Heart left ventricle (tissue), 16 donors: ENCODE measurements at regions of chr6 and their contacts with region 1.

Region 1: DNA sequence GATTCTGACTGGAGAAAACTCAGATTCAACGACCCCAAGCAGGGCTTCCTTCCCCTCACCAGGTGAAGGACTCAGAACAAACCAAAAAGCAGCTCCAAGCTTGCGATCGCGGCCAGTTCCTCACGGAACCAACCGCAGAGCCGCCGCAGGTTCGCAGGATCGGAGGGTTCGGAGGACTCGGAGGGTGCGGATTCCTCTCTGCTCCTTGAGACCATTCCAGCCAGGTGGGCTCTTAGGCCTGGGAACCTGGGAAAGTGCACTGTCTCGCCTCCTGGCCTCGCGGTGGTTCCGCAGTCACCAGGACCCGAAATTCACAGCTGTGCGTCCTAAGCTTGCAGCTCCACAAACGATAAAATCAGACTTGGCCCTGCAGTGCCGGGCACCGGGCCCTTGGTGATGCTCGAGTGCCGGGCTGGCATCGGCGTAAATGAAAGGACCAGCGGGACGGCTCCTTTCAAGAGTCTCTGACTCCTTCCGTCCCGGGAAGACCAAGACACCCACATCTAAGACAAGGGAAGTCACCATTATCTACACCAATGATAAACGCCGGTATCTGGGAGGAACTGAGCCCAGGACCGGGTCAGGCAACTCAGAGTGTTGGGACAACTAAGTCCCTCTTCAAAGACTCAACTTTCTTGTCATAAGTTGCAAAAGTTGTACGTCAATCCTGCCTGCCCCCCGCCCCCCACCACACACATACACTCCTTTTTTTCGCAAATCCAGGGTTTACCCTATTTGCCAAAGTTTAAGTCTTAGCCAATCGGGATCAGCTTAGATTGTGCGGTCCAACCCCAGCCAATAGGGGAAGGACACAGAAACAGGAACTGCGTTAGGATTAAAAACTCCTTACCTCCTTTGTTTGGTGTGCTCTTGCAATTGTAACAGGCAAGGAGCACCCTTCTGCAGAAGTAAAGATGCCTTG is 69.8 kb upstream of the PRSS16 start:
- DNase-seq: peak; percentile 61 to 83 (median 74)
- ATAC-seq: peak; percentile 77 to 91 (median 90)
- H3K4me3 ChIP-seq: peak overlapping the region; percentile 62 to 96 (median 76)
- H3K27ac ChIP-seq: peak overlapping the region in 11 of 12 donors; percentile 14 to 83 (median 67)
- H3K4me1 ChIP-seq: peaks cover 0 to 17% (median 5%) of the 10 kb centered on the region in 12 donors
- H3K27me3 ChIP-seq: no peaks in the 10 kb centered on the region
- CTCF ChIP-seq: peak in 9 of 12 donors; percentile 19 to 51 (median 35)
- POLR2A ChIP-seq: peak in 1 of 2 donors; percentile 39

Region 2: DNA sequence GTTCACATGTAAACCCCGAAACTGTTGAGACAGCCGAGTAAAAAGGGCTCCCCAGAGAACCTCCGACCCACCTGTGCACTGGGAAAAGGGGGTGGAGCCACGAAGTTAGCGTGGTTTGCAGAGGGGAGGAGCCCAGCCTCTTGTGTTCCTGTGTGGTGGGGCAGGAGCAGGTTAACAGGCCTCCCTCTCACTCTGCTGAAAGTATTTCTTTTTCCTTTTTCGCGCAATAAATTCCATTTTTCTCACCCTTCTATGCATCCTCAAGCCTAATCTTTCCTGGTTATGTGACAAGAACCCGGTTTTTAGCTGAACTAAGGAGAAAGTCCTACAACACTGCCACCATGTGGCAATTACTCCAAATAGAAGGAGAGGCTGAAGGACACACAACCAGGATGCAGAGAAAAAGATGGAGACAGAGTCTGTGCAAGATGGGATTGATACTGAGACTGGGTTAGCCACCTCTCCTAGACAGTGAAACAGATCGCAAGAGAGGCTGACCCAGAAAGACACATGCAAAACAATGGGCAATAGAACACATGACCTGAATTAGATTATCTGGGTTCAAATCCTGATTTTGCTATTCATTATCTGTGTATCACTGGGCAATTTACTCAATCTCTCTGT is 98.9 kb before region 1 on chr6:
- intact Hi-C with region 1: no loop called
- DNase-seq: peak in 1 of 5 donors; percentile 18
- ATAC-seq: peak in 2 of 4 donors; percentile 66 to 68
- H3K4me3 ChIP-seq: peak overlapping the region in 1 of 12 donors; percentile 8
- H3K27ac ChIP-seq: no peak overlapping the region
- H3K4me1 ChIP-seq: peaks cover 0 to 4% (median 0%) of the 10 kb centered on the region in 12 donors
- H3K27me3 ChIP-seq: peaks cover 0 to 69% (median 17%) of the 10 kb centered on the region in 9 donors
- CTCF ChIP-seq: peak; percentile 42 to 71 (median 58)
- POLR2A ChIP-seq: no peak

Region 3: GRCh38 chr6:27230758-27231111 is 53.0 kb after region 1 on chr6:
- intact Hi-C with region 1: no loop called
- DNase-seq: no peak
- ATAC-seq: no peak
- H3K4me3 ChIP-seq: no peak overlapping the region
- H3K27ac ChIP-seq: no peak overlapping the region
- H3K4me1 ChIP-seq: no peaks in the 10 kb centered on the region
- H3K27me3 ChIP-seq: peaks cover 0 to 91% (median 38%) of the 10 kb centered on the region in 9 donors
- CTCF ChIP-seq: no peak
- POLR2A ChIP-seq: no peak

Region 4: DNA sequence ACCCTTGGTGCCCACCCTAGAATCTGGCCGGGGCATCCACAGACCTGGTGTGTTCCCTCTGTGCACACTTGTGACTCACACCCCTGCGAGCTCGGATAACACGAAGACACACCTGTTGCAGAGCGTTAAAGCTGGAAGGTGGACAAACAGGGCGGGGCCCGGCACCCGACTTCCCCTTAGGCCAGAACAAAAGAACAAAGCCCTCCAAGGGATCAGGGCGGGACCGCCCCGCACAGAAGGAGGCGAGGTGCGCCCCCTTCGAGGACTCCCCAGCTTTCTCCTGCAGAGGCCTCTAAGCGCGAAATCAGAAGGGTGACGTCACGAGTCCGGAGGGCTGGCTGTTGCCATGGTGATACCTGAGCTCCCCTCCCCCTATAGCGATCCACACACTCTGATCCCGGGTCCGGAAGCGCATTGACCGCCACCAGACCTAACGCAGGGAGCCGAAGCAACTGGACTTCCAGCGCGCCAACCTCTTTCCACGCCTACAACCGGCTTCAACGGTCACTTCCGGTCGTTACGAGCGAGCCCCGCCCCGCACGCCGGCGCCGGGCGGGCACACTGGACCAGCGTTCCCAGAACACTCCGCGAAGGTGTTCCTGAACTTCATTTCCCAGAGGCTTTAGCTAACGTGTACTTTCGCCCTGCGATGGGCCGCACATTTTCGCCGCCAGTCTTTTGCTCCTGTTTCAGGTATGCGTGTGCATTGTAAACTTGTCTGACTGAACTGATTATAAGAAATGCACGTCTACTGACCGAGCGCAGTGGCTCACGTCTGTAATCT is 295.1 kb after region 1 on chr6 and contains the start of gene ZNF184:
- intact Hi-C with region 1: loop called in 9 of 10 experiments (anchors 5 to 10 kb)
- DNase-seq: peak; percentile 95 to 96 (median 96)
- ATAC-seq: peak; percentile 99 to 100 (median 100)
- H3K4me3 ChIP-seq: peak within 1 kb of the TSS; percentile 52 to 99 (median 86)
- H3K27ac ChIP-seq: peak within 1 kb of the TSS; percentile 34 to 92 (median 86)
- H3K4me1 ChIP-seq: peaks cover 0 to 37% (median 19%) of the 10 kb centered on the region in 12 donors
- H3K27me3 ChIP-seq: no peaks in the 10 kb centered on the region
- CTCF ChIP-seq: peak in 3 of 12 donors; percentile 2 to 29 (median 24)
- POLR2A ChIP-seq: peak in 1 of 2 donors; percentile 78
- total RNA-seq, gene ZNF184: 3.2 to 6.5 (median 4.0) TPM

Region 5: GRCh38 chr6:27479319-27480182 is 301.8 kb after region 1 on chr6:
- intact Hi-C with region 1: loop called in 9 of 10 experiments (anchors 5 to 10 kb)
- DNase-seq: peak; percentile 51 to 89 (median 76)
- ATAC-seq: peak; percentile 89 to 95 (median 94)
- H3K4me3 ChIP-seq: peak overlapping the region; percentile 70 to 96 (median 76)
- H3K27ac ChIP-seq: peak overlapping the region; percentile 92 to 100 (median 96)
- H3K4me1 ChIP-seq: peaks cover 0 to 15% (median 10%) of the 10 kb centered on the region in 12 donors
- H3K27me3 ChIP-seq: no peaks in the 10 kb centered on the region
- CTCF ChIP-seq: no peak
- POLR2A ChIP-seq: peak in 1 of 2 donors; percentile 24

Region 6: DNA sequence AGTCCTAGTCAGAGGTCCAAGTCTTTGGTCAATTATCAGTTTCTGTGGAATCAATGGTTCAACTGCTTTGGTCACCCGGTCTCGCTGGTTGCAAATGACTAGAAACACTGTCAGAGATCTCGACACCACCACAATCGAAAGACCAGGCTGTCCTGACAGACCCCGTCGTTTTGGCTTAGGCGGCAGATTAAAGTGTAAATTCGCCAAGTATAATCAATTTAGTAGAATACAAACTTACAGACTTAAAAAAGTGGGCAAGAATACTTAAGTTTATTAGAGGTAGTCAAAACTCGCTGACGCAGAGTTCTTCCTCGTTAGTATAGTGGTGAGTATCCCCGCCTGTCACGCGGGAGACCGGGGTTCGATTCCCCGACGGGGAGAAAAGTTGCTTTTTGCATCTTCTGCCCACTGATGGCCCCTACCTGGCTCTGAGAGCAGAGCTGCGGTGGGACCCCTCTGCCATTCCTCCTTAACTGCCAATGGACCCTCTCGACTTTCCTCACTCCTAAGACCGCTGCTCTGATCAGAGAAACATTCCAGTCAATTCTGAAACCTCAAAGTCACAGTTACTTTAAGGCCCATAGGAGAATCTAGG is 325.8 kb after region 1 on chr6:
- intact Hi-C with region 1: loop called in 2 of 10 experiments (anchors 5 to 10 kb)
- DNase-seq: peak; percentile 40 to 79 (median 44)
- ATAC-seq: peak; percentile 72 to 82 (median 79)
- H3K4me3 ChIP-seq: peak overlapping the region in 11 of 12 donors; percentile 29 to 63 (median 52)
- H3K27ac ChIP-seq: peak overlapping the region in 1 of 12 donors; percentile 2
- H3K4me1 ChIP-seq: peaks cover 0 to 13% (median 5%) of the 10 kb centered on the region in 12 donors
- H3K27me3 ChIP-seq: peaks cover 0 to 28% (median 2%) of the 10 kb centered on the region in 9 donors
- CTCF ChIP-seq: no peak
- POLR2A ChIP-seq: no peak

Region 7: DNA sequence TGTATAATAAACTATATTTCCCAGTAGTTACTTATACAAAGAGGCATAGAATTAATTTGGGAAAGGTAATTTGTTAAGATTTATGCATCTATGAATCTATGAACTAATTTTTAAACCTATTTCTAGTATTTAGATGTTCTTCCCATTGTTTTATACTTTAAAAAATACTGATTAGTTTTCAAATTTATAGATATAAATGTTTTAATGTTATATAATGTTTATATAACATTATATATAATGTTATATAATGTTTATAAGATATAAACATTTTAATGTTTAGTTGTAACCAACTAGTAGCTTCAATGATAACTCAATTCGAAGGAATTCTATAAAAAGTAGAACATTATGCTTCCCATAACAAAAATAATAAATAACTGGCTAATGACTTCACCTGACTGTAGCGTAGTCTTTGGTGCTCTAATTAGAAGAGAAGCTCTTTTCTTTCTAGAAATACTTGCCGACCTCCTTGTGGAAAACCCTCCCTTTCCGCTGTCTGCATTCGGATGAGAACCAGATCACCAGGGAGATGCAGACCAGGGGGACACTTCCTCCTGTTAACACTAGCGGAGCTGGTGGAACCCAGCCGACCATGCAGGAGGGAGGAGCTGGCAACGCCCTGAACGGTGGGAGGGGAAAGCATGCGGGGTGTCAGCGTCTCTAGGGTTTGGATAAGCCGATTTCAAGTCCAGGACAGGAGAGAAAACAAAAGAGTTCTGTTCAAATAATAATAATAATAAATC is 576.1 kb after region 1 on chr6:
- intact Hi-C with region 1: loop called in 2 of 10 experiments (anchors 5 to 10 kb)
- DNase-seq: peak; percentile 37 to 81 (median 56)
- ATAC-seq: peak in 2 of 4 donors; percentile 67 to 77
- H3K4me3 ChIP-seq: peak overlapping the region in 10 of 12 donors; percentile 61 to 88 (median 69)
- H3K27ac ChIP-seq: no peak overlapping the region
- H3K4me1 ChIP-seq: peaks cover 0 to 23% (median 7%) of the 10 kb centered on the region in 12 donors
- H3K27me3 ChIP-seq: peaks cover 5 to 30% (median 20%) of the 10 kb centered on the region in 9 donors
- CTCF ChIP-seq: peak in 1 of 12 donors; percentile 7
- POLR2A ChIP-seq: peak in 1 of 2 donors; percentile 7

Region 8: DNA sequence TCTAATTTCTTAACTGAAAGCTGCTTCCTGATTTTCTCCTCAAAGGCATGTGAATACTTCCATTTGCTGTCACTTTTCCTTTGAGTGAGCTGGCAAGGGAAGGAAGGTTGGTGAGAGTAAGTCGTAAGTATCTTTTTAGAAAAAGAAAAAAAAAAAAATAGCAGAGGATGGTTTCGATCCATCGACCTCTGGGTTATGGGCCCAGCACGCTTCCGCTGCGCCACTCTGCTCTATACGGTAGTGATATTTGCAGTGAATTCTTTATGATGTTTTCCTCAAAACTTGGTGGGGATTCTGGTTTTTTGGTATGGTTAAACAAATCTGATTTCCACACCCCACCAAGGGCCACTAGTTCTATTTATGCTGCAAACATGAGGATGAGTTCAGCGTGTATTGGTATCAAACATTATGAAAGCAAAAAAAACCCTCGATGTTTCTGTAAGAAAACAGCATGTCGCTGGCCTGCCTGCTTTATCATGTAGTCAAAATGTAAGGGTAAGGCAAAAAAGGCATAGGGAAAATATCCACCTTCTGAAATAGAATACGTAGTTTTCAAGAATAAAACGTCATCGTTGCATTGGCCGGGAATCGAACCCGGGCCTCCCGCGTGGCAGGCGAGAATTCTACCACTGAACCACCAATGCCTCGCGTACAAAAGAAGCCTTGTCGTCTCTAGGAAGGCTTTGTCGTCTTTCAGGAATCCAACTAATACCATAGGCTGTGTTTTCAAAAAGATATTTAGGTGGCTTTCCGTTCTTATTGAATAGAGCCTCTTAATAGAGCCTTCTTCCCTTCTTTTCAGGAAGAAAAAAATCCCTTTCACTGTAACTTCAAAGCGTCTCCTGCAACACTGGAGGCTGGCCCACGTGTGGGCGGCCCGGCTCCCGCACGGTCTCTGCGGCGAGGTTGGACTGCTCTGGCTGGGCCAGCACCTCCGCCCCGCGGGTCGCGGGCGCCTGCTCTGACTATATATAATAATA is 724.9 kb after region 1 on chr6:
- intact Hi-C with region 1: loop called in 3 of 10 experiments (anchors 5 to 10 kb)
- DNase-seq: peak; percentile 73 to 86 (median 83)
- ATAC-seq: peak; percentile 90 to 96 (median 96)
- H3K4me3 ChIP-seq: peak overlapping the region; percentile 30 to 71 (median 60)
- H3K27ac ChIP-seq: peak overlapping the region in 11 of 12 donors; percentile 36 to 90 (median 76)
- H3K4me1 ChIP-seq: peaks cover 0 to 14% (median 2%) of the 10 kb centered on the region in 12 donors
- H3K27me3 ChIP-seq: no peaks in the 10 kb centered on the region
- CTCF ChIP-seq: no peak
- POLR2A ChIP-seq: no peak